B cell (primary cell): ENCODE measurements at regions of chr9 and their contacts with region 1.

Region 1: GRCh38 chr9:137672907-137673791 is 54.3 kb downstream of the EHMT1 start:
- DNase-seq: peak; percentile 85
- ATAC-seq: peak; percentile 97
- H3K4me3 ChIP-seq: no peak overlapping the region
- H3K4me3 Mint-ChIP-seq: peak overlapping the region; percentile 59
- H3K27ac ChIP-seq: peak overlapping the region; percentile 44 to 61
- H3K27ac Mint-ChIP-seq: peak overlapping the region; percentile 86
- H3K4me1 ChIP-seq: peaks cover 29 to 35% of the 10 kb centered on the region in 2 donors
- H3K4me1 Mint-ChIP-seq: peaks cover 57% of the 10 kb centered on the region
- H3K27me3 ChIP-seq: no peaks in the 10 kb centered on the region
- H3K27me3 Mint-ChIP-seq: no peaks in the 10 kb centered on the region
- CTCF ChIP-seq: peak; percentile 87

Region 2: GRCh38 chr9:137694967-137695879 is 22.1 kb after region 1 on chr9:
- CTCF ChIA-PET with region 1: interaction called, 38 read pairs
- POLR2A ChIA-PET with region 1: interaction called, 3 read pairs
- intact Hi-C with region 1: loop called (anchors 1 kb)
- DNase-seq: peak; percentile 69
- ATAC-seq: peak; percentile 56
- H3K4me3 ChIP-seq: no peak overlapping the region
- H3K4me3 Mint-ChIP-seq: peak overlapping the region; percentile 49
- H3K27ac ChIP-seq: peak overlapping the region in 1 of 2 donors; percentile 23
- H3K27ac Mint-ChIP-seq: peak overlapping the region; percentile 86
- H3K4me1 ChIP-seq: peaks cover 37 to 43% of the 10 kb centered on the region in 2 donors
- H3K4me1 Mint-ChIP-seq: peaks cover 66% of the 10 kb centered on the region
- H3K27me3 ChIP-seq: no peaks in the 10 kb centered on the region
- H3K27me3 Mint-ChIP-seq: no peaks in the 10 kb centered on the region
- CTCF ChIP-seq: peak; percentile 72

Region 3: DNA sequence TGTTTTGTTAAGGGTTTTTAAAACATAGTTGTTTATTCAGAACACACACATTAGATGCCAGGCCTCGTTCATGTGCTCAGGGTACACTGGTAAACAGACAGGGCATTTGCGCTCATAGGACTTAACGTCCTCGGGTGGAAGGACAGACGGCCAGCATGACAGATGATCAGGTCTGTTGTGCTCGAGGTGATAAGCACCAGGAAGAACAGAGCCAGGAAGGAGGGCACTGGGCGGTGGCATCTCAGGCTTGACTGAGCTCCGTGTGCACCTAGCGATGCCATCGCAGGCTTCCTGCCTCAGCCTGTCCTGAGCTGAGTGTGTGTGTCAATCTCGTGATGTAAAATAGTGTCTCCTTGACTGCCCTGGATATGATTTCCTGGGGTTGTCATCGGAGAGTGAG is 42.2 kb after region 1 on chr9:
- CTCF ChIA-PET with region 1: interaction called, 17 read pairs
- POLR2A ChIA-PET with region 1: interaction called, 4 read pairs
- intact Hi-C with region 1: loop called (anchors 1 kb)
- DNase-seq: peak; percentile 78
- ATAC-seq: peak; percentile 92
- H3K4me3 ChIP-seq: peak overlapping the region in 1 of 5 experiments; percentile 12
- H3K4me3 Mint-ChIP-seq: peak overlapping the region; percentile 74
- H3K27ac ChIP-seq: peak overlapping the region; percentile 45 to 64
- H3K27ac Mint-ChIP-seq: peak overlapping the region; percentile 99
- H3K4me1 ChIP-seq: peaks cover 14 to 36% of the 10 kb centered on the region in 2 donors
- H3K4me1 Mint-ChIP-seq: peaks cover 38% of the 10 kb centered on the region
- H3K27me3 ChIP-seq: no peaks in the 10 kb centered on the region
- H3K27me3 Mint-ChIP-seq: no peaks in the 10 kb centered on the region
- CTCF ChIP-seq: no peak

Region 4: GRCh38 chr9:137757613-137758029 is 84.5 kb after region 1 on chr9:
- CTCF ChIA-PET with region 1: interaction called, 18 read pairs
- POLR2A ChIA-PET with region 1: interaction called, 6 read pairs
- intact Hi-C with region 1: no loop called
- DNase-seq: peak; percentile 76
- ATAC-seq: peak; percentile 18
- H3K4me3 ChIP-seq: peak overlapping the region in 2 of 5 experiments; percentile 13 to 23
- H3K4me3 Mint-ChIP-seq: peak overlapping the region; percentile 78
- H3K27ac ChIP-seq: peak overlapping the region; percentile 88
- H3K27ac Mint-ChIP-seq: peak overlapping the region; percentile 99
- H3K4me1 ChIP-seq: peaks cover 60% of the 10 kb centered on the region in 2 donors
- H3K4me1 Mint-ChIP-seq: peaks cover 63% of the 10 kb centered on the region
- H3K27me3 ChIP-seq: no peaks in the 10 kb centered on the region
- H3K27me3 Mint-ChIP-seq: no peaks in the 10 kb centered on the region
- CTCF ChIP-seq: no peak

Region 5: GRCh38 chr9:137772281-137772873 is 99.2 kb after region 1 on chr9:
- CTCF ChIA-PET with region 1: interaction called, 25 read pairs
- POLR2A ChIA-PET with region 1: interaction called, 4 read pairs
- intact Hi-C with region 1: loop called (anchors 1 kb)
- DNase-seq: peak; percentile 56
- ATAC-seq: peak; percentile 39
- H3K4me3 ChIP-seq: no peak overlapping the region
- H3K4me3 Mint-ChIP-seq: no peak overlapping the region
- H3K27ac ChIP-seq: no peak overlapping the region
- H3K27ac Mint-ChIP-seq: peak overlapping the region; percentile 56
- H3K4me1 ChIP-seq: no peaks in the 10 kb centered on the region
- H3K4me1 Mint-ChIP-seq: peaks cover 21% of the 10 kb centered on the region
- H3K27me3 ChIP-seq: no peaks in the 10 kb centered on the region
- H3K27me3 Mint-ChIP-seq: no peaks in the 10 kb centered on the region
- CTCF ChIP-seq: peak; percentile 39